GM12878 (cell line): ENCODE measurements at regions of chr20 and their contacts with region 1.

Region 1: GRCh38 chr20:47708140-47708807 is 77.0 kb downstream of the SULF2 start:
- DNase-seq: peak; percentile 30
- ATAC-seq: peak; percentile 58
- H3K4me3 ChIP-seq: no peak overlapping the region
- H3K27ac ChIP-seq: no peak overlapping the region
- H3K4me1 ChIP-seq: peaks cover 36% of the 10 kb centered on the region
- H3K27me3 ChIP-seq: no peaks in the 10 kb centered on the region
- CTCF ChIP-seq: no peak
- EP300 ChIP-seq: peak in 1 of 2 experiments; percentile 92; a peak in 3 of 4 replicates
- POLR2A ChIP-seq: no peak
- RAD21 ChIP-seq: no peak

Region 2: DNA sequence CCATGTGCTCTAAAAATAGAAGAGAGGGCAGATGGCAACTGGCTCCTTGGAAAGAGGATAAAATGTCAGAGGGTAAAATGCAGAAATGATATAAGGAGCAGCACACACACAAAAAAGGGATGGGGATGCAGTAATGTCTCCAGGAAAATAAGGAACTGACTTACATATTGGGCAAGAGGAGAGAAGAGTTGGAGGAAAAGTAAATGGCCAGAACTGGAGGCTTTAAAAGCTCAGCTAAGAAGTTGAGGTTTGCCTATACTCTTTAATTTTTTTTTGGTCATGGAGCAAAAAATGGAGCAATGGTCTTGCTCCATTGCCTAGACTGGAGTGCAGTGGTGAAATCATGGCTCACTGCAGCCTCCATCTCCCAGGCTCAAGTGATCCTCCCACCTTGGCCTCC is 16.6 kb before region 1 on chr20:
- CTCF ChIA-PET with region 1: interaction called, 10 read pairs
- POLR2A ChIA-PET with region 1: interaction called, 3 read pairs
- RAD21 ChIA-PET with region 1: interaction called, 3 read pairs
- SMC1A ChIA-PET with region 1: interaction called, 19 read pairs
- in situ Hi-C with region 1: no loop called
- intact Hi-C with region 1: no loop called
- DNase-seq: no peak
- ATAC-seq: no peak
- H3K4me3 ChIP-seq: no peak overlapping the region
- H3K27ac ChIP-seq: no peak overlapping the region
- H3K4me1 ChIP-seq: peaks cover 13% of the 10 kb centered on the region
- H3K27me3 ChIP-seq: no peaks in the 10 kb centered on the region; a peak in 1 of 4 replicates
- CTCF ChIP-seq: no peak
- EP300 ChIP-seq: no peak
- POLR2A ChIP-seq: no peak
- RAD21 ChIP-seq: no peak

Region 3: GRCh38 chr20:47735412-47736400 is 27.4 kb after region 1 on chr20:
- CTCF ChIA-PET with region 1: no interaction called
- POLR2A ChIA-PET with region 1: no interaction called
- RAD21 ChIA-PET with region 1: no interaction called
- SMC1A ChIA-PET with region 1: no interaction called
- in situ Hi-C with region 1: no loop called
- intact Hi-C with region 1: no loop called
- DNase-seq: no peak
- ATAC-seq: no peak
- H3K4me3 ChIP-seq: no peak overlapping the region
- H3K27ac ChIP-seq: no peak overlapping the region
- H3K4me1 ChIP-seq: no peaks in the 10 kb centered on the region
- H3K27me3 ChIP-seq: no peaks in the 10 kb centered on the region; a peak in 1 of 4 replicates
- CTCF ChIP-seq: no peak
- EP300 ChIP-seq: no peak
- POLR2A ChIP-seq: no peak
- RAD21 ChIP-seq: no peak

Region 4: DNA sequence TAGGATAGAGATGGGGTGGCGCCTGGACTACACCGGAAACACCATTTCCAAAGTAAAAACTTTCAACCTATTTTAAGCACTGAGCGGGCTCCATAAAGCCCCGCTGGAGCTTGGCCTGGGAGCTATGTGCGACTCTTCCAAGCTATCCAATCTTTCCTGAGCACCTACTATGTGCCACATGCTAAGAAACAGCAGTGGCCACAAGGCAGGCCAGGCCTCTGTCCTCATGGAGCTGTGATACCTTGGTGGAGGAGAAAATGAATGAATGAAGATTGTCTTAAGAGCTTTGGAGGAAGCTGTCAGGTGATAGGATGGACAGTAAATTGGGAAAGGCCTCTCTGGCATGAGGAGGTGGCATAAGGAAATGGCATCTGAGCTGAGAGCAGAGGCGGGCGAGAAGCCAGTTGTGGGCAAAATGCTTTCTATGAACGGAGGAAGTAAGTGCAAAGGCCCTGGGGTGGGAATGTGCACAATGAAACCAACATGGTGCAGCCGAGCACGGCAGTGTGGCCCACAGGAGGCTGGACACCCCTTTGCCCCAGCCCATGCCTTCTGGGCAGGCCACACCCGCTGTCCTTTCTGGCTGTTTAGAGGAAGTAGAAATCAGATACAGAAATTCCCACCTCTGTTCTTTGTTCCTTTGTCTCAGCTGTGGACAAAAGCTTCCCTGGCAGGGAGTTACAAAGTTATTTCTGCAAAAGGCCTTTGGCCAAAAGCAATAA is 64.9 kb after region 1 on chr20:
- CTCF ChIA-PET with region 1: no interaction called
- POLR2A ChIA-PET with region 1: no interaction called
- RAD21 ChIA-PET with region 1: no interaction called
- SMC1A ChIA-PET with region 1: no interaction called
- in situ Hi-C with region 1: no loop called
- intact Hi-C with region 1: no loop called
- DNase-seq: no peak
- ATAC-seq: no peak
- H3K4me3 ChIP-seq: no peak overlapping the region
- H3K27ac ChIP-seq: no peak overlapping the region
- H3K4me1 ChIP-seq: peaks cover 3% of the 10 kb centered on the region
- H3K27me3 ChIP-seq: peaks cover 0 to 2% of the 10 kb centered on the region in 2 experiments; a peak in 1 of 4 replicates
- CTCF ChIP-seq: no peak
- EP300 ChIP-seq: no peak
- POLR2A ChIP-seq: no peak
- RAD21 ChIP-seq: no peak